ENCODE measurements at regions of chr7 and their contacts with region 1.

Region 1: GRCh38 chr7:5665094-5666025 is 116.1 kb downstream of the RNF216 start:
- DNase-seq: peak; percentile 71
- H3K4me3 Mint-ChIP-seq: no peak overlapping the region
- H3K27ac Mint-ChIP-seq: no peak overlapping the region
- H3K4me1 Mint-ChIP-seq: peaks cover 14% of the 10 kb centered on the region
- H3K27me3 Mint-ChIP-seq: no peaks in the 10 kb centered on the region

Region 2: DNA sequence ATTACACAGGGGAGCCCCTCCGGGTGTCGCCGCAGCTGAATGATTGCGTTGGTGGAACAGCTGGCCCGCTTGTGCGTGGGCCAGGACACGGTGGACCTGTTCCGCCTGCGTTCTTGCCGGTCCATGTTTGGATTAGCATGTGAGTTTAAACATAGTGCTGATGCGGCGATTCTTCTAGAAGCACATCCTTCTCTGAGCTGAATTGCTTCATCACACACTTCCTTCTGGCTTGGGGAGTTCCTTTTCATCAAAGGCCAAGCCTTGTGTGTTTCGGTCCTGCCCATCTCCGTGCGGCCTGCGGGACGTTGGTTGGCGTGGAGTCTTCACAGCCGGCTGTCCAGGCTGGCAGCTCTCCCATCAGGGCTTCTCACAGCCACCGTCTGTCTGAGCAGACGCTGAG is 428.1 kb before region 1 on chr7:
- CTCF ChIA-PET with region 1: interaction called, 10 read pairs
- POLR2A ChIA-PET with region 1: no interaction called
- DNase-seq: no peak
- H3K4me3 Mint-ChIP-seq: no peak overlapping the region
- H3K27ac Mint-ChIP-seq: no peak overlapping the region
- H3K4me1 Mint-ChIP-seq: peaks cover 12% of the 10 kb centered on the region
- H3K27me3 Mint-ChIP-seq: peaks cover 12% of the 10 kb centered on the region

Region 3: DNA sequence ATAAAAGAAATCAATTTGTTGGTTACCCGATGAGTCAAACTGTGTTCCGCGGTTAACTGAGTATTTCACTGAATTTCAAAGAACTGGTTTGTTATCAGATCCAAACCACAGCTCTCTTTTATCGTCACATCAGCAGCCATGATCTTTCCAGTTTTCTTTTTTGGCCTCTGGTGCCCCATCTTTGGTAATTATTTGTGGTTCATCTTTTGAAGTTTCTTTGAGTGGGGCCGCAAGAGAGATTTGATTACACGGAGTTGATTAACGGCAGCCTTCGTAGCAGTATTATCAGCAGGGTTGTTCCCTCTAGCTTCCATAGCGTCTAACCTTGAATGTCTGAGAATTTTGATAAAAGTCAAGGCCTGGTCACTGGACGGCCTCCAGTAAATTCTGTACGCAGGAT is 86.9 kb before region 1 on chr7:
- CTCF ChIA-PET with region 1: interaction called, 11 read pairs
- POLR2A ChIA-PET with region 1: no interaction called
- DNase-seq: no peak
- H3K4me3 Mint-ChIP-seq: no peak overlapping the region
- H3K27ac Mint-ChIP-seq: peak overlapping the region; percentile 37
- H3K4me1 Mint-ChIP-seq: peaks cover 21% of the 10 kb centered on the region
- H3K27me3 Mint-ChIP-seq: peaks cover 53% of the 10 kb centered on the region

Region 4: DNA sequence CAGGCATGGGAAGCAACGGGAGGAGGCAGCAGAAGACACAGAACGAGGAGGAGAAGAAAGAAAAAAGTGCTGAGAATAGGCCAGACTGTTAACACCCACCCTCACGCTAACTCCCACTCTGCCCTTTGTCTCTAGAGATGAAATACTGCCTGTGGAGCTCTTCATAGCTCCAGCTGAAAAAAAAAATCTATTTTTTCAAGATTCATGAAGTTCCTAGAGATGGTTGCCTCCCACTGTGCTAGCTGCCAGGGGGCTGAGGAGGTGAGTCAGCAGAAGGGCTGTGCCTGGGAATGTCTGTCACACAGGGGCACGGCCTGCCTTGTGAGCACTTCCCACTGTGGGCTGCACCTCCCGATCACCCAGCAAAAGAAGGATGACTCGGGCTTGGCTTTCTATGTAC is 28.4 kb before region 1 on chr7:
- CTCF ChIA-PET with region 1: interaction called, 15 read pairs
- POLR2A ChIA-PET with region 1: no interaction called
- DNase-seq: no peak
- H3K4me3 Mint-ChIP-seq: no peak overlapping the region
- H3K27ac Mint-ChIP-seq: no peak overlapping the region
- H3K4me1 Mint-ChIP-seq: peaks cover 9% of the 10 kb centered on the region
- H3K27me3 Mint-ChIP-seq: no peaks in the 10 kb centered on the region

Region 5: GRCh38 chr7:5677538-5678294 is 12.4 kb after region 1 on chr7:
- CTCF ChIA-PET with region 1: interaction called, 26 read pairs
- POLR2A ChIA-PET with region 1: no interaction called
- DNase-seq: peak; percentile 53
- H3K4me3 Mint-ChIP-seq: no peak overlapping the region
- H3K27ac Mint-ChIP-seq: no peak overlapping the region
- H3K4me1 Mint-ChIP-seq: peaks cover 9% of the 10 kb centered on the region
- H3K27me3 Mint-ChIP-seq: no peaks in the 10 kb centered on the region

Region 6: GRCh38 chr7:5704534-5704922 is 39.2 kb after region 1 on chr7:
- CTCF ChIA-PET with region 1: interaction called, 10 read pairs
- POLR2A ChIA-PET with region 1: no interaction called
- DNase-seq: peak; percentile 79
- H3K4me3 Mint-ChIP-seq: no peak overlapping the region
- H3K27ac Mint-ChIP-seq: no peak overlapping the region
- H3K4me1 Mint-ChIP-seq: peaks cover 34% of the 10 kb centered on the region
- H3K27me3 Mint-ChIP-seq: peaks cover 8% of the 10 kb centered on the region

Region 7: DNA sequence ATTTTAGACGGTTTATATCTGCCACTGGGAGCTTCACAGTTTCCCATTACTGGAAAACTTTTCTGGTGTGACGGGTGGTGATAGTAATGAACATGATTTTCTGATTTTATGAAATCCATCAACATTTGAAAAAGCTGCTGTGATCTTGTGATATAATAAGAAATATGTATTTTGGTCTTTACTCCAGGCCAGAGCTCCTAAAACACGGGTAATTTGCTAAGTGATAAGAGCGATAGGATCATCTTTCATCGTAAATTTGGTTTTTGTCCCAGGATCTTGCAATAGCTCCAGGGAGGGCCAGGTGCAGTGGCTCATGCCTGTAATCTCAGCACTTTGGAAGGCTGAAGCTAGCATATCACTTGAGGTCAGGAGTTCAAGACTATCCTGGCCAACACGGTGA is 126.9 kb after region 1 on chr7:
- CTCF ChIA-PET with region 1: no interaction called
- POLR2A ChIA-PET with region 1: no interaction called
- DNase-seq: no peak
- H3K4me3 Mint-ChIP-seq: no peak overlapping the region
- H3K27ac Mint-ChIP-seq: no peak overlapping the region
- H3K4me1 Mint-ChIP-seq: peaks cover 6% of the 10 kb centered on the region
- H3K27me3 Mint-ChIP-seq: no peaks in the 10 kb centered on the region